CD4-positive, alpha-beta T cell (primary cell): ENCODE measurements at regions of chr3 and their contacts with region 1.

Region 1: DNA sequence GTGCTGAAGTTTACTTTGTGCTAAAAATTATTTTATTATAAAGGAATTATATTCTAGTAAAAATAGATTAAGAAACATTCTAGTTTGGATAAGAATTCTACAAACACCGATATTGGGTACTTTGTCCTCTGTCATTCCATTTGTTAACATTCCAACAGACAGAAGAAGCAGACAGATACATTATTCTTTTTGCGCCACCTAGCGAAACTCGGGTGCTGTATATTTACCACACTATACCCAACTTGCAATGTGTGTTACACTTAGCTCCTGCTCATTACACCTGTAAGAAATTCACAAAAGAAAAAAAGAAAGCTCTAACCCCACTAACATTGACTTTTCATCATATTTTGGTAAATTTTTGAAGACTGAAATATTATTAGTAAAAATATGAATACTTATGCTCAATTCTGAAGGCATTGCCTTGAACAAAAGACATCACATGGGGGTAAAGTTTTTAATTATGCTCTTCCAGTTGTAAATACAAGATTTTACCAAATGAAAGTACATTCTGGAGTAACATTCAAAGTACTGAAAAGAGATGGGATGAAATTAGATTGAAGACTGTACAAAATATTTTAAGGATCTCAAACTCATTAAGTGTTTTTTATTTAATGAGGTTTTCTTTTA is 136.5 kb upstream of the MLF1 start:
- DNase-seq: peak in 8 of 14 experiments; percentile 3 to 51 (median 24)
- ATAC-seq: no peak
- H3K4me3 ChIP-seq: no peak overlapping the region
- H3K4me3 Mint-ChIP-seq: no peak overlapping the region
- H3K27ac ChIP-seq: no peak overlapping the region
- H3K27ac Mint-ChIP-seq: no peak overlapping the region
- H3K4me1 ChIP-seq: no peaks in the 10 kb centered on the region
- H3K4me1 Mint-ChIP-seq: no peaks in the 10 kb centered on the region
- H3K27me3 ChIP-seq: no peaks in the 10 kb centered on the region
- H3K27me3 Mint-ChIP-seq: no peaks in the 10 kb centered on the region
- CTCF ChIP-seq: peak; percentile 65

Region 2: GRCh38 chr3:157532529-157533297 is 901.8 kb before region 1 on chr3:
- CTCF ChIA-PET with region 1: no interaction called
- POLR2A ChIA-PET with region 1: no interaction called
- intact Hi-C with region 1: loop called in 1 of 2 experiments (anchors 10 kb)
- DNase-seq: peak in 3 of 14 experiments; percentile 28 to 39 (median 35)
- ATAC-seq: no peak
- H3K4me3 ChIP-seq: no peak overlapping the region
- H3K4me3 Mint-ChIP-seq: no peak overlapping the region
- H3K27ac ChIP-seq: no peak overlapping the region
- H3K27ac Mint-ChIP-seq: no peak overlapping the region
- H3K4me1 ChIP-seq: no peaks in the 10 kb centered on the region
- H3K4me1 Mint-ChIP-seq: no peaks in the 10 kb centered on the region
- H3K27me3 ChIP-seq: no peaks in the 10 kb centered on the region
- H3K27me3 Mint-ChIP-seq: no peaks in the 10 kb centered on the region
- CTCF ChIP-seq: peak; percentile 27

Region 3: GRCh38 chr3:157606011-157606851 is 828.3 kb before region 1 on chr3:
- CTCF ChIA-PET with region 1: no interaction called
- POLR2A ChIA-PET with region 1: no interaction called
- intact Hi-C with region 1: loop called in 1 of 2 experiments (anchors 2 kb)
- DNase-seq: peak; percentile 20 to 69 (median 44)
- ATAC-seq: peak; percentile 82
- H3K4me3 ChIP-seq: no peak overlapping the region
- H3K4me3 Mint-ChIP-seq: no peak overlapping the region
- H3K27ac ChIP-seq: no peak overlapping the region
- H3K27ac Mint-ChIP-seq: no peak overlapping the region
- H3K4me1 ChIP-seq: peaks cover 4% of the 10 kb centered on the region
- H3K4me1 Mint-ChIP-seq: peaks cover 5% of the 10 kb centered on the region
- H3K27me3 ChIP-seq: no peaks in the 10 kb centered on the region
- H3K27me3 Mint-ChIP-seq: peaks cover 14% of the 10 kb centered on the region
- CTCF ChIP-seq: peak; percentile 80

Region 4: GRCh38 chr3:157618075-157618760 is 816.3 kb before region 1 on chr3:
- CTCF ChIA-PET with region 1: no interaction called
- POLR2A ChIA-PET with region 1: no interaction called
- intact Hi-C with region 1: loop called in 1 of 2 experiments (anchors 2 kb)
- DNase-seq: peak in 3 of 14 experiments; percentile 49 to 63 (median 53)
- ATAC-seq: peak; percentile 85
- H3K4me3 ChIP-seq: no peak overlapping the region
- H3K4me3 Mint-ChIP-seq: no peak overlapping the region
- H3K27ac ChIP-seq: no peak overlapping the region
- H3K27ac Mint-ChIP-seq: no peak overlapping the region
- H3K4me1 ChIP-seq: no peaks in the 10 kb centered on the region
- H3K4me1 Mint-ChIP-seq: peaks cover 6% of the 10 kb centered on the region
- H3K27me3 ChIP-seq: peaks cover 0 to 14% of the 10 kb centered on the region in 2 experiments
- H3K27me3 Mint-ChIP-seq: peaks cover 19% of the 10 kb centered on the region
- CTCF ChIP-seq: peak; percentile 80

Region 5: DNA sequence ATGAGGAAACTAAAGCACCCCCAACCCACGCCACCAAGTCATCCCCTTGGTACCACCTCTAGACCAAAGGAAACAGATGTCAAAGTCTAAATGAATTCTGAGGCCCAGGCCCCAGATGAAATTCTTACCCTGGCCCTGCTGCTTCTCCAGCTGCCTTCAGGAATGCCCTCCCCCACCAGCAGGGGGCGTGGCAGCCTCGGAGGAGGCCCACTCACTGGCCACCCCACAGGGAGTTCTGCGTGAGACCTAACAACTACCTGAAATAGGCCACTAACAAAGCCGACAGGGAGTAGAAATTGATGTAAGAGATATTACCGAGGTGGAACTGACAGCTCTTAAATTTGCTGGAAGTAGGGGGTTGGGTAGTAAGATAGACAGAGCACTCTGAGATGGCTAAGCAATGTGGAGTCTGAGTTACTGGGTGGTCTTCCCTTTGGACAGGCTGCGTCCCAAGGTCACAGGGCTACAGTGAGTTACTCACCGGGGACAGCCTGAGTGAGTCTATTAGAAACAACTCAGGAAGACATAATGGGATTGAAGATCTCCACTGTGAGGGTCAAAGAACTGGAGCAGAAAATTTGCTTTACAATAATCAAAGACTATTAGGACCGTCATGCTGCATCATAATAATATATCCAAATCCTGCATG is 569.0 kb before region 1 on chr3:
- CTCF ChIA-PET with region 1: no interaction called
- POLR2A ChIA-PET with region 1: no interaction called
- intact Hi-C with region 1: loop called in 1 of 2 experiments (anchors 5 kb)
- DNase-seq: peak in 7 of 14 experiments; percentile 0 to 38 (median 4)
- ATAC-seq: no peak
- H3K4me3 ChIP-seq: no peak overlapping the region
- H3K4me3 Mint-ChIP-seq: no peak overlapping the region
- H3K27ac ChIP-seq: no peak overlapping the region
- H3K27ac Mint-ChIP-seq: no peak overlapping the region
- H3K4me1 ChIP-seq: no peaks in the 10 kb centered on the region
- H3K4me1 Mint-ChIP-seq: no peaks in the 10 kb centered on the region
- H3K27me3 ChIP-seq: no peaks in the 10 kb centered on the region
- H3K27me3 Mint-ChIP-seq: no peaks in the 10 kb centered on the region
- CTCF ChIP-seq: peak; percentile 29